ENCODE measurements at regions of chr12 and their contacts with region 1.

Region 1: DNA sequence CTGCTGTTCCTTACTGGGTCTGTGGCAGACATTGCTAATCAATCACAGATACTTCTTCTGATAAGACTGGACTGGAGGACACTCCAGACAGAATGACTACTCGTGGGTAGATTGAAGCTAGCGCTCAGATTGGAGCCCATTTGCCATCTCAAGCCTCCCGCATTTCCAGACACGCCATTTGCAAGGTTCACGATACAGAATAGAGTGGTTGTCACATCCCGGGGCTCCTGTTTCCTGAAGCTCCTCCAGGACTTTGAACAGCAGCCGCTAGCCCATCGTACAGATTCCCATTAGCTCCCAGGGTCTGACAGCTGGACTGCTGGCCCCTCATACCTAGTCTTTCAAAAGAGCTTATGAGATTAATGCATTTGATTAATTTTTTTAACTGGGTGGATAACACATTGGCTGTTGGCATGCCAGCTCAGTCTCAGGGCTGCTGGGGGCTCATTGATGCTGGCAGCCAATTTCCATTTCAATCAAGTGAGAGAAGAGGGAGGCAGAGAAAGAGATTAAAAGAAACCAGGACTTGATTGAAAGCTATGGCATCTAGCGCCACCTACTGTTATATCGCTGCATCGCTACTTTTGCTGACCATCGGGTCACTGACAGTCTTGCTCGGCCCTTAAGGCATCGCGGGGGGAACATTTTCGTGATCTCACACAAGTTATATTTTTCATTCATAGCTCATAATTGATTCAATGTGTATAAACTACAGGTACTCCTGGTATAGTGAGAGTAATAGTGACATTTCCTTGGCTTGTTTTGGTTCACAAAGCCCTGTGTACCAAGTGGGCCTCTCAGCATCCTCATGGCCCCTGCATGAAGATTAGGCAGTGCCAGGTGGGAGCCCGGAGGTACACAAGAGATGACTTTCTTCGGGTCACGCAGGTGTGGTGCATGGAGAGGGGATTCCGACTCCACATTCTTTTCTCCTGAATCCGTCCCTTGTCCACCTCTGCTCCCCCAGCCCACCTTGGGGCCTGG is 78.6 kb downstream of the CCDC60 start:
- DNase-seq: peak; percentile 63 to 69
- H3K4me3 ChIP-seq: no peak overlapping the region
- H3K4me3 Mint-ChIP-seq: no peak overlapping the region
- H3K27ac Mint-ChIP-seq: no peak overlapping the region
- H3K4me1 ChIP-seq: peaks cover 9% of the 10 kb centered on the region; the same call in 1 of the 2 replicates
- H3K4me1 Mint-ChIP-seq: peaks cover 16% of the 10 kb centered on the region
- H3K27me3 ChIP-seq: no peaks in the 10 kb centered on the region
- H3K27me3 Mint-ChIP-seq: no peaks in the 10 kb centered on the region
- CTCF ChIP-seq: peak; percentile 72 to 79

Region 2: DNA sequence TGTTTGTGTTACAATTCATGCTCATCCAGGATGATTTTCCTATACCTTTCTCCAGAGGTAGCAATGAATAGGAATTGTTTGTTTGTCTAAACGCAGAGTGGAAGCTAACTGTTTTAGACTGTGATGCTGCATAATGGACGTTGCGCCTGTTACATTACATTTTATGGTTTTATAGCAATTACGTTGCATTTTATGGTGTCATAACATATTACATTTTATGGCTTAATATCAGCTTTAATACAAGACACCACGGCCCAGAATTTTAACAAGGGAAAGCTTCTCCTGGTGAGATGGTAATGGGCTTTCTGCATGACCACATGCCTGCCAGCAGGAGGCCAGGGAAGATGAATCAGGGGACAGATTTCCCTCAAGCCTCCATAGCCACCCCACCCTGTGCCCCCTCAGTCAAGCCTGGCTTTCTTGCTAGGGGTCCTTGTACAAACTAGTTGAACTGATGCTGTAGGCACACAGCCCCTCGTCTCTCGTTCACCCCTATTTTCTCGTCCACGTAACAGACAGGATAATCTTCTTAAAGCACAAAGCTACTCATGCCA is 177.8 kb before region 1 on chr12:
- CTCF ChIA-PET with region 1: no interaction called
- POLR2A ChIA-PET with region 1: no interaction called
- intact Hi-C with region 1: loop called (anchors 5 kb)
- DNase-seq: peak in 1 of 2 experiments; percentile 14
- H3K4me3 ChIP-seq: no peak overlapping the region
- H3K4me3 Mint-ChIP-seq: no peak overlapping the region
- H3K27ac Mint-ChIP-seq: no peak overlapping the region
- H3K4me1 ChIP-seq: peaks cover 11% of the 10 kb centered on the region
- H3K4me1 Mint-ChIP-seq: peaks cover 11% of the 10 kb centered on the region
- H3K27me3 ChIP-seq: no peaks in the 10 kb centered on the region
- H3K27me3 Mint-ChIP-seq: no peaks in the 10 kb centered on the region
- CTCF ChIP-seq: peak; percentile 49 to 54

Region 3: DNA sequence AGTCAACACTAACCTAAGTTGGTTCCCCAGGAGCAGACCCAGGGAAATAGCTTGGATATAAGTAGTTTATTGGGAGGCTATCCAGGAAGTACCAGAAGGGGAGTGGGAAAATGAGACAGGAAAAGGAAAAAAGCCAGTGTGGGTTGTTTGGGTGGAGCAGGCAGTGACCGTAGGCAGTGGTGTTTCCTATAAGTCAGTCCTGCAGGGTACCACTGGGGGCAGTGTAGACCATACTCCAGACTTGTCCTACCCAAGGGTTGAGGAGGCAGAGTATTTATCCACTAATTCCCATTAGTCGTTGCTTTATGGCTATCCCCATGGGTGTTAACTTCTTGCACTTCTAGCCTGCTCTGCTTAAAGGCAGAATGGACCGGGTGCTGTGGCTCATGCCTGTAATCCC is 85.0 kb before region 1 on chr12:
- CTCF ChIA-PET with region 1: interaction called, 3 read pairs
- POLR2A ChIA-PET with region 1: no interaction called
- intact Hi-C with region 1: loop called (anchors 2 kb)
- DNase-seq: peak; percentile 48
- H3K4me3 ChIP-seq: no peak overlapping the region
- H3K4me3 Mint-ChIP-seq: no peak overlapping the region
- H3K27ac Mint-ChIP-seq: no peak overlapping the region
- H3K4me1 ChIP-seq: no peaks in the 10 kb centered on the region
- H3K4me1 Mint-ChIP-seq: no peaks in the 10 kb centered on the region
- H3K27me3 ChIP-seq: no peaks in the 10 kb centered on the region; the same call in 1 of the 2 replicates
- H3K27me3 Mint-ChIP-seq: peaks cover 3% of the 10 kb centered on the region
- CTCF ChIP-seq: peak; percentile 29 to 56